ENCODE measurements at regions of chrX and their contacts with region 1.

Region 1: GRCh38 chrX:41259516-41259915 is 74.4 kb upstream of the DDX3X start:
- DNase-seq: peak in 1 of 2 donors; percentile 53
- ATAC-seq: no peak
- H3K4me3 ChIP-seq: no peak overlapping the region
- H3K27ac ChIP-seq: no peak overlapping the region
- H3K4me1 ChIP-seq: no peaks in the 10 kb centered on the region
- H3K27me3 ChIP-seq: no peaks in the 10 kb centered on the region

Region 2: GRCh38 chrX:40539214-40540142 is 720.0 kb before region 1 on chrX:
- intact Hi-C with region 1: loop called in 1 of 2 experiments (anchors 10 kb)
- DNase-seq: peak in 1 of 2 donors; percentile 75
- ATAC-seq: peak; percentile 57
- H3K4me3 ChIP-seq: no peak overlapping the region
- H3K27ac ChIP-seq: no peak overlapping the region
- H3K4me1 ChIP-seq: no peaks in the 10 kb centered on the region
- H3K27me3 ChIP-seq: no peaks in the 10 kb centered on the region

Region 3: GRCh38 chrX:41275661-41276609 is 16.4 kb after region 1 on chrX:
- intact Hi-C with region 1: loop called in 1 of 2 experiments (anchors 2 kb)
- DNase-seq: peak; percentile 80 to 87
- ATAC-seq: peak; percentile 77
- H3K4me3 ChIP-seq: peak overlapping the region; percentile 13 to 21
- H3K27ac ChIP-seq: peak overlapping the region in 1 of 2 donors; percentile 32
- H3K4me1 ChIP-seq: no peaks in the 10 kb centered on the region
- H3K27me3 ChIP-seq: no peaks in the 10 kb centered on the region

Region 4: DNA sequence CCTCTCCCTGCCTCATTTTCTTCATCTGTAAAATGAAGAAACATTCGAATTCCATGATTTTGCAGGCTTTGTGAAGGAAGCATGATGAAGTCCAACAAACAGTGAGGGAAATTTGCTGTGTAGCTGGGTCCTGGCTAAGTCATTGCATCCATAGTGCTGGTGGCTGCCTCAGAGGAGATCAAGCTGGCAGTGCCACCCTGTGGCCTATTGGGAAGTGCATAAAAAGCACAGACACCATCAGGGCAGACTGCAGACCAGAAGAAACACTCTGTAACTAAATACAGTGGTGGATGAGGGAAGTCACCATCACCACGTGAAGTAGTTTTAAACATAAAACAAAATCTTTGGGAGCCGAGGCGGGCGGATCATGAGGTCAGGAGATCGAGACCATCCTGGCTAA is 33.8 kb after region 1 on chrX:
- intact Hi-C with region 1: no loop called
- DNase-seq: no peak
- ATAC-seq: no peak
- H3K4me3 ChIP-seq: no peak overlapping the region
- H3K27ac ChIP-seq: no peak overlapping the region
- H3K4me1 ChIP-seq: no peaks in the 10 kb centered on the region
- H3K27me3 ChIP-seq: no peaks in the 10 kb centered on the region

Measured in aorta (tissue), 5 donors.